ENCODE measurements at regions of chrX and their contacts with region 1.

Region 1: DNA sequence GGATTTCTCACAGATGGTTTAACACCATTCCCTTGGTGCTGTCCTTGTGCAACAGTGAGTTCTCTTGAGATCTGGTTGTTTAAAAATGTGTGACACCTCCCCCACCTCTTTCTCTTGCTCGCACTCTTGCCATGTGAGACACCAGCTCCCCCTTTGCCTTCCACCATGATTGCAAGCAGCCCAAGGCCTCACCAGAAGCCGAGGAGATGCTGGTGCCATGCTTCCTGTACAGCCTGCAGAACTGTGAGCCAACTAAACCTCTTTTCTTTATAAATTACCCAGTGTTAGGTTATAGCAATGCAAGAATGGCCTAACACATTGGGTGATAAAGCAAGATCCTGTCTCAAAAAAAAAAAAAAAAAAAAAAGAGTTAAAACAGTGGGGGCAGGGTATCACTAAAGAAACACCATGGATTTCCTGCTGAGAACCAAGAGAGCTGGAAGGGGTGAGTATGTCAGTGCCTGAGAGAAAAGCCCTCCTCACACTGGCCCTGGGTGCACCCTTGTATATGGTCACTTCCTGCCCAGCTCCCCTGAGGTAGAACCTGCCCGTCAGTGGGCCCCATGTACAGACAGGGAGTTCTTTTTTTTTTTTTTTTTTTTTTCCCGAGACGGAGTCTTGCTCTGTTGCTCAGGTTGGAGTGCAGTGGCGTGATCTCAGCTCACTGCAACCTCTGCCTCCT is 46.4 kb downstream of the APOO start:
- DNase-seq: no peak
- ATAC-seq: no peak
- H3K4me3 Mint-ChIP-seq: no peak overlapping the region
- H3K27ac Mint-ChIP-seq: no peak overlapping the region
- H3K4me1 Mint-ChIP-seq: no peaks in the 10 kb centered on the region
- H3K27me3 Mint-ChIP-seq: no peaks in the 10 kb centered on the region
- CTCF ChIP-seq: no peak

Region 2: DNA sequence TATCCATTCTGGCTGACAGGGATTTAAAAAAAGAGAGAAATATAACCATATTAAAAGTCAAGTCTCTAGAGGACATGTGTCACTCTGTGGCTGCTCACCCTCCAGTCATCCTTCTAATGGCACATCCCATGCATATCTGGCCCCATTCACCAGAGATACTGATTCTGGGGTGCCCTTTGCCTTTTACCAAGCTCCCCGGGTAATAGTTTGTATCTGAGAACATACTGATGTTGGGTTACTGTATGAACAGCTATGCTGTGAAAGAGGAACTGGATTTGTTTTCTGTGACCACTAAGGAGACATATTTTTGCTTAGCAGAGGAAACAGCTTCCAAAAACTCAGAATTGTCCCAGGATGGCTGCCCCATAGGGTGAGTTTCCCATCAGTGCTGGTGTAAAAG is 22.4 kb before region 1 on chrX:
- CTCF ChIA-PET with region 1: no interaction called
- POLR2A ChIA-PET with region 1: interaction called, 10 read pairs
- intact Hi-C with region 1: no loop called
- DNase-seq: no peak
- ATAC-seq: no peak
- H3K4me3 Mint-ChIP-seq: no peak overlapping the region
- H3K27ac Mint-ChIP-seq: no peak overlapping the region
- H3K4me1 Mint-ChIP-seq: peaks cover 7% of the 10 kb centered on the region
- H3K27me3 Mint-ChIP-seq: no peaks in the 10 kb centered on the region
- CTCF ChIP-seq: no peak